Esophagus muscularis mucosa (tissue), 4 donors: ENCODE measurements at regions of chr2 and their contacts with region 1.

Region 1: DNA sequence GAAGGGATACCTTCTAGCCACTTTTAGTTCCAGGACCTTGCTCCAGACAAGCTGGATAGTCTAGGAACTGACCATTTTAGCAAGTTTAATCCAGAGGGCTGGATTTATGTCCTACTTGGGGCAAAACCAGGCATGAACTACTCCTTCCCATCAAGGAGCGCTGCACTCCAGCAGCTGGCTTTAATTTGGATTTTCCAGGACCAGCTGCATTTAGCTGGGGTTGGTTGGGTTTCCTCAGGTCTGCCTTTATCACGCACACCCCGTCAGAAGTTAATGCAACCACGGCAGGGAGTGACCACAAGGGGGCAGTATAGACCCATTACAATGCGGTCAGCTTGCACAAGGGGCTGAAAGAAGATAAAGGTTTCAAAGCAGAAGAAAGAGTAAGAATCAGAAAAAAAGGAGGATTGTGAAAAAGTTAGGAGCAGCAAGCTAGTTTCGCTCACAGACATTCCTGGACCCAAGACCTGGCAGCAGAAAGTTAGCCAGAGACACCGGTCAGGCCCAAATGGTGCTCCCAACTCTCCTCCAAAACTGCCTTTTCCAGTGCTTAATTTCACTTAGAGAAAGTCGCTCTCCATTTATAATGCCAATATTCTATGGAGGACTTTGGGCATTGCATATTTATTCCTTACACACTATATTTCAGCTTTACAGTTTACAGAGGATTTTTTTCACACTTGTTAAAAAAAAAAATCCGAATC is 40.1 kb downstream of the SLC4A1AP start:
- DNase-seq: peak; percentile 98
- H3K4me3 ChIP-seq: no peak overlapping the region
- H3K27ac ChIP-seq: peak overlapping the region; percentile 81 to 91 (median 89)
- H3K4me1 ChIP-seq: peaks cover 42 to 55% (median 48%) of the 10 kb centered on the region in 4 donors
- H3K27me3 ChIP-seq: no peaks in the 10 kb centered on the region
- CTCF ChIP-seq: peak; percentile 93 to 97 (median 93)
- EP300 ChIP-seq: no peak
- POLR2A ChIP-seq: no peak

Region 2: DNA sequence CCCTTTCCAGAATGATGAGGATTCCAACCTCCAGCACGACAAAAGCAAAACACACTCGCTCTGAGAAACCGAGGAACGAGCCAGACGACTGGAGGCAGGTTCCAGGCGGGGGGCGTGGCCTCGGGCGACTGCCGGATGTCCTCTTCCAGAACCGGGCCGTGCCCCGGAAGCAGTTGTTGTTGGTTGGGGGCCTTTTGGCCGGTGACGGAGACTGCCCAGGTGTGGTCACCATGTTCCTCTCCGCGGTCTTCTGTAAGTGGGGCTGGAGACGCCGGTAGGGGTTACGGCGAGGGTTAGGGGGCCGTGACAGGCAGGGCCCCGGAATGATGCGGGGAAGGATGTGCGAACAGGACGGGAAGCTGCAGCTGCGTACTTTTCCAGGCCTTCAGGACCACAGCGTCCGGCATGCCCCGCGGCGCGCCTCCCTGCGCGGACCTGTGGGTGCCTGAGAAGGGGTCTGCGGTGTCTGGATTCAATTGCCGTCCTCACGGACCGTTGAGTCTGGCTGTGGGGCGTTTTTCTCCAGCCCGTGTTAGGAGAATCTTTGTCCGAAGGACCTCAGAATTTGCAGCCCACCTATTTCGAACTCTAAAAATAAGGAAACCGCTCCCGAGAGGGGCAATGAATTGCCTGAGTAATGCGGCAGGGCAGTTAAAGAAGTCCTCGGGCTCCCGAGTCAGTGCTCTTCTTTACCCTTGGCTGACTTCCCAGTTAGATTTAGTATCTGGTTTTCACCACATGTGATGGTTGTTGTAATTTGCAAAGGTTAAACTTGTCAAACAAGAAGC is 68.0 kb after region 1 on chr2 and contains the start of gene MRPL33:
- intact Hi-C with region 1: loop called (anchors 5 kb)
- DNase-seq: peak; percentile 99
- H3K4me3 ChIP-seq: peak within 1 kb of the TSS; percentile 68 to 77 (median 74)
- H3K27ac ChIP-seq: peak within 1 kb of the TSS; percentile 87 to 94 (median 88)
- H3K4me1 ChIP-seq: peaks cover 22 to 48% (median 47%) of the 10 kb centered on the region in 4 donors
- H3K27me3 ChIP-seq: no peaks in the 10 kb centered on the region
- CTCF ChIP-seq: no peak
- EP300 ChIP-seq: no peak
- POLR2A ChIP-seq: peak; percentile 62
- total RNA-seq, gene MRPL33: 283 to 500 (median 345) TPM

Region 3: GRCh38 chr2:27798948-27799645 is 95.3 kb after region 1 on chr2:
- intact Hi-C with region 1: loop called (anchors 5 kb)
- DNase-seq: peak; percentile 91
- H3K4me3 ChIP-seq: no peak overlapping the region
- H3K27ac ChIP-seq: peak overlapping the region; percentile 86 to 94 (median 89)
- H3K4me1 ChIP-seq: peaks cover 59 to 83% (median 69%) of the 10 kb centered on the region in 4 donors
- H3K27me3 ChIP-seq: no peaks in the 10 kb centered on the region
- CTCF ChIP-seq: no peak
- EP300 ChIP-seq: peak; percentile 98
- POLR2A ChIP-seq: no peak

Region 4: GRCh38 chr2:27823569-27823968 is 119.8 kb after region 1 on chr2:
- intact Hi-C with region 1: loop called (anchors 10 kb)
- DNase-seq: no peak
- H3K4me3 ChIP-seq: peak overlapping the region; percentile 35 to 43 (median 41)
- H3K27ac ChIP-seq: peak overlapping the region; percentile 74 to 85 (median 82)
- H3K4me1 ChIP-seq: peaks cover 9 to 20% (median 15%) of the 10 kb centered on the region in 4 donors
- H3K27me3 ChIP-seq: no peaks in the 10 kb centered on the region
- CTCF ChIP-seq: peak; percentile 56 to 74 (median 68)
- EP300 ChIP-seq: no peak
- POLR2A ChIP-seq: no peak

Region 5: GRCh38 chr2:28452534-28453081 is 748.8 kb after region 1 on chr2:
- intact Hi-C with region 1: loop called (anchors 2 kb)
- DNase-seq: peak; percentile 93
- H3K4me3 ChIP-seq: no peak overlapping the region
- H3K27ac ChIP-seq: no peak overlapping the region
- H3K4me1 ChIP-seq: peaks cover 0 to 11% (median 0%) of the 10 kb centered on the region in 4 donors
- H3K27me3 ChIP-seq: no peaks in the 10 kb centered on the region
- CTCF ChIP-seq: peak; percentile 87 to 94 (median 87)
- EP300 ChIP-seq: no peak
- POLR2A ChIP-seq: no peak